Dorsolateral prefrontal cortex (tissue), 120 donors: ENCODE measurements at regions of chr5 and their contacts with region 1.

Region 1: GRCh38 chr5:171418316-171418981 is 998 bp upstream of the FGF18 start:
- DNase-seq: peak; percentile 54 to 84 (median 74)
- H3K4me3 ChIP-seq: peak overlapping the region; percentile 16 to 75 (median 51)
- H3K27ac ChIP-seq: no peak overlapping the region
- H3K27me3 ChIP-seq: peaks cover 0 to 16% (median 0%) of the 10 kb centered on the region in 45 donors
- CTCF ChIP-seq: peak; percentile 57 to 96 (median 86)

Region 2: DNA sequence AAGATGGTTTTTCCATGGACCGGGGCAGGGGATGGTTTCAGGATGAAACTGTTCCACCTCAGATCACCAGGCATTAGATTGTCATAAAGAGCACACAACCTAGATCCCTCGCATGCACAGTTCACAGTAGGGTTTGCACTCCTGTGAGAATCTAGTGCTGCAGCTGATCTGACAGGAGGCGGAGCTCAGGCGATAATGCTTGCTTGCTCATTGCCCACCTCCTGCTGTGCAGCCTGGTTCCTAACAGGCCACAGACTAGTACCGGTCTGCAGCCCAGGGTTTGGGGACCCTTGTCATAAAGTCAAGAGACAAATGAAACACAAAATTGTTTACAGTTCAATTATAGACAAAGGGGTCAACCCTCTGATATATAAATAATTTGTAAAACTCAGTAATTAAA is 454.9 kb before region 1 on chr5:
- intact Hi-C with region 1: no loop called
- DNase-seq: no peak
- H3K4me3 ChIP-seq: no peak overlapping the region
- H3K27ac ChIP-seq: no peak overlapping the region
- H3K27me3 ChIP-seq: no peaks in the 10 kb centered on the region
- CTCF ChIP-seq: no peak

Region 3: DNA sequence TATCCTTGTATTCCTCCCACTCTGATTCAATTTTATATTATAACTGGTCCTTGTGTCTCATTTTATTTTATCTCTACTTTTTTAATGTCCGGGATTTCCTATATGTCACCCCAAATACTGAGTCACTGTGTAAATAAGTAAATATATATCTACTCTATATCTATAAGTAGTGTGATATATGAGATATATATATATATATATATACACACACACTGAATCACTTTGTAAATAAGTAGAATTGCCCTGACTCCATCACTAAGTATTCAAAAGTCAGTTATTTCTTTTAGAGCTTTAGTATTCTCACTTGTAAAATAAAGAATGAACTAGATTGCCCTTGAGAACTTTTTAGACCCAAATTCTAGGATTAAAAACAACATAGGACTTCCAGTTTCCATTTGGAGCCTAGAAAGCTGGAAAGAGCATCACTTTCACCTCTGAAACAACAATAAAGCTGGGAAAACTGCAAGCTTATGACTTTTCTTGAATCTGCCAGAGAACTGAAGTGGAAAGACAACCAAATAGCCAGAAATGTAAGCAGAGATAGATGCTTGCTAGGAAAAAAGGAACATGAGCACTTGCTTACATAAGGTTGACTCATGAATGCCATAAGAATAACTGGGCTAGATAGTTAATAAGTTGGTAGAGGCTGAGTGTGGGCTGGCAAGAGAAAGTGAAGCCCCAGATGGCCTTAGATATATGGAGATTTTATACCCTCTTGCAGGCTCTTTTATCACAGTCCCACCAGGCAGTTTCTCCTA is 280.5 kb before region 1 on chr5:
- intact Hi-C with region 1: no loop called
- DNase-seq: no peak
- H3K4me3 ChIP-seq: no peak overlapping the region
- H3K27ac ChIP-seq: no peak overlapping the region
- H3K27me3 ChIP-seq: peaks cover 0 to under 1% (median 0%) of the 10 kb centered on the region in 45 donors
- CTCF ChIP-seq: no peak

Region 4: GRCh38 chr5:171175746-171176145 is 242.7 kb before region 1 on chr5:
- intact Hi-C with region 1: no loop called
- DNase-seq: no peak
- H3K4me3 ChIP-seq: no peak overlapping the region
- H3K27ac ChIP-seq: no peak overlapping the region
- H3K27me3 ChIP-seq: no peaks in the 10 kb centered on the region
- CTCF ChIP-seq: no peak

Region 5: DNA sequence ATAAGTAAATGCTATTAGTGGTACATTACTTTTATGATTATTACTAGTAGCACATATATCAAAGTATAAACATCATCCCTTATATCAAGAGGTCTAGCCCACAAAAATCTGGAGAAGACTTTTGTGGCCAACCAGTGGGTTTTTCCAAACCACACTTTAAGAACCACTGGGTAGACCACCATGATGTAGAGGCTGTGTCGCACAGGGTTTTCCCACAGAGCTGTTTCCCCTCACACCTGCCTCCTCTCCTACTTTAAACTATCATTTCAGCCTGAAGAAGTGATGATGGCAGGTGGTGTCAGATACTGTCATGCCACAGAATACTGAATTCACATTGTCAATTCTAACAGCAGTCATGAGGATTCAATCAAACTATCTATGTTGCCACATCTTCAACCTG is 478.8 kb after region 1 on chr5:
- intact Hi-C with region 1: loop called in 1 of 2 experiments (anchors 5 kb)
- DNase-seq: no peak
- H3K4me3 ChIP-seq: no peak overlapping the region
- H3K27ac ChIP-seq: no peak overlapping the region
- H3K27me3 ChIP-seq: no peaks in the 10 kb centered on the region
- CTCF ChIP-seq: no peak

Region 6: GRCh38 chr5:171907725-171908343 is 489.4 kb after region 1 on chr5:
- intact Hi-C with region 1: loop called (anchors 1 to 5 kb)
- DNase-seq: peak in 2 of 10 donors; percentile 39 to 56
- H3K4me3 ChIP-seq: no peak overlapping the region
- H3K27ac ChIP-seq: no peak overlapping the region
- H3K27me3 ChIP-seq: no peaks in the 10 kb centered on the region
- CTCF ChIP-seq: peak; percentile 65 to 93 (median 84)